CD14-positive monocyte (primary cell): ENCODE measurements at regions of chr14 and their contacts with region 1.

Region 1: DNA sequence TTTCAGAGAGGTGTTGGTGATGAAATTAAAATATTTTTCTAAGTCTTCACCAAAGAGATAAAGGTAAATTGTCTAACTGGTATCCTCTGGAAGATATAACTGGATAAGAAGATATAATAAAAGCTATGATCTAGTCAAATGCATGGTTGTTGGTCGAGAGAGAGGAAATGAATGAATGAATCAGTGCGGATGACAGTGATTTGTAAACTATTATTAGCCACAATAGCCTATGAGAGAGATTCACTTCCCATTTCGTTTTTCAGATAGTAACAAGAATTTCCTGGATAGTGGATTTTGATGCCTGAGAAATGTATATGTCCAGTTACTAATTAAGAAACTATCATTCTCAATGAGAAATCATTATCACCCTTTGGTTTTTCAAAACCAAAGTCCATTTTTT is 63.1 kb downstream of the HEATR5A start:
- DNase-seq: peak in 2 of 3 donors; percentile 11 to 29
- H3K4me3 ChIP-seq: no peak overlapping the region
- H3K4me3 Mint-ChIP-seq: no peak overlapping the region
- H3K27ac ChIP-seq: no peak overlapping the region
- H3K27ac Mint-ChIP-seq: no peak overlapping the region
- H3K4me1 ChIP-seq: peaks cover 13 to 23% of the 10 kb centered on the region in 2 donors
- H3K4me1 Mint-ChIP-seq: peaks cover 11% of the 10 kb centered on the region
- H3K27me3 ChIP-seq: no peaks in the 10 kb centered on the region
- H3K27me3 Mint-ChIP-seq: peaks cover 0 to 9% (median 2%) of the 10 kb centered on the region in 3 donors
- CTCF ChIP-seq: no peak

Region 2: GRCh38 chr14:31300296-31300695 is 57.0 kb before region 1 on chr14:
- intact Hi-C with region 1: loop called in 1 of 2 experiments (anchors 10 kb)
- DNase-seq: no peak
- H3K4me3 ChIP-seq: no peak overlapping the region
- H3K4me3 Mint-ChIP-seq: no peak overlapping the region
- H3K27ac ChIP-seq: no peak overlapping the region
- H3K27ac Mint-ChIP-seq: peak overlapping the region in 2 of 7 donors; percentile 17 to 27
- H3K4me1 ChIP-seq: no peaks in the 10 kb centered on the region
- H3K4me1 Mint-ChIP-seq: no peaks in the 10 kb centered on the region
- H3K27me3 ChIP-seq: no peaks in the 10 kb centered on the region
- H3K27me3 Mint-ChIP-seq: no peaks in the 10 kb centered on the region
- CTCF ChIP-seq: no peak

Region 3: DNA sequence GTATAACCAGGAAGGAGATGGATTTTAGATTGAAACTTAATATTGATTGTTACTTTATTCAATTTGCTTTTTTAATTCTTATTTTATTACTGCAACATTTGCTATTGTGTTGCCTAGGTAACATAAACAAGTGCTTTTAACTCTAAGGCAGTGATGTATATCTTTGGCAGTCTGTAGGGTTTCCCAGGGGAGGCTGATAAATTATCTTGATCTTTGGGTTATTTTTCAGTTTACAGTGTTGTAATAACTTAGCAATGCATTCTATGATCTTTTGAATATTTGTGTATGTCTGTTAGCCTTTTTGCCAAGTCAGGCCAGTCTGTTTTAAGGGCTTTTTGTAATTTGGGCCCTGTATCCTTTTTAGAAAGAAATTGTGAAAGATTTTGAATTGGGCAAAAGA is 107.8 kb after region 1 on chr14:
- intact Hi-C with region 1: no loop called
- DNase-seq: no peak
- H3K4me3 ChIP-seq: no peak overlapping the region
- H3K4me3 Mint-ChIP-seq: no peak overlapping the region
- H3K27ac ChIP-seq: no peak overlapping the region
- H3K27ac Mint-ChIP-seq: no peak overlapping the region
- H3K4me1 ChIP-seq: no peaks in the 10 kb centered on the region
- H3K4me1 Mint-ChIP-seq: peaks cover 5% of the 10 kb centered on the region
- H3K27me3 ChIP-seq: no peaks in the 10 kb centered on the region
- H3K27me3 Mint-ChIP-seq: peaks cover 0 to 3% (median 3%) of the 10 kb centered on the region in 3 donors
- CTCF ChIP-seq: no peak

Region 4: GRCh38 chr14:31703056-31703455 is 345.8 kb after region 1 on chr14:
- intact Hi-C with region 1: no loop called
- DNase-seq: no peak
- H3K4me3 ChIP-seq: no peak overlapping the region
- H3K4me3 Mint-ChIP-seq: no peak overlapping the region
- H3K27ac ChIP-seq: no peak overlapping the region
- H3K27ac Mint-ChIP-seq: no peak overlapping the region
- H3K4me1 ChIP-seq: no peaks in the 10 kb centered on the region
- H3K4me1 Mint-ChIP-seq: no peaks in the 10 kb centered on the region
- H3K27me3 ChIP-seq: no peaks in the 10 kb centered on the region
- H3K27me3 Mint-ChIP-seq: no peaks in the 10 kb centered on the region
- CTCF ChIP-seq: no peak